SK-N-SH (cell line): ENCODE measurements at regions of chr2 and their contacts with region 1.

Region 1: DNA sequence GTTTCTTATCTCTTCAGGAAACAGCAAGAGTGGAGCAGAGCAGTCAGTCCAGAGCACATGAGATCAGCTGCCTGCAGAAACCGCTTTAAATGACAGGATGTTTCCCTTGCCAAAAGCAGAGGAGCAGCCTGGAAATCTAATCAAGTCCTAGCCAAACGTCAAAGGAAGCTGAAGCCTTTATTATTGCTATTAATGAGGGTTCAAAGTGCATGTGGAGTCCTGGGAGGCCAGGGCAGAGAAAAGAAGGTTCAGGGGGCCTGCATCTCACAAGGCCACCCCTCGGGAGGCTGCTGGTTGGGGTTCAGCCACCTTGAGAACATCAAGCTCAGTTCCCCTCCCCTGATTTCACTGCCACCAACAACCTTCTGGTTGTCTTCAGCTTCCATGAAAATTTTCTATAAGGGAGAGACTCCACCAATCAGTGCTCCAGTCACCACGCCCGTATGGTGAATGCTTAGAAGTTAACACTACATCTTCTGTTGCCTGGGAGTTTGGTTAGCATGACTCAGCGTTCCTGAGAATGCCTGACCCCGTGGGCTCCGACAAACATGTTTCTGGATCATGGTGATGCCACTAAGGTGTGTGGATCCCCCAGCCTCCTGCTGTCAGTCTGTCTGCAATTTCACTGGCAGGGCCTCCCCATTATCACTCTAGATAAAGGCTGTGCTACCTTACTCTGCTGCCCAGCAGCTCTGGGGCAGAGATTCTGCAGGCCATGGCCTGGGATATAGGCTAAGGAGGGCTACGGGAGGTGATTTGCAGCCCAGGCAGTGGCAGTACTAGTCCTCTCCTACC is 66.2 kb downstream of the STPG4 start:
- DNase-seq: peak; percentile 87
- H3K4me3 ChIP-seq: no peak overlapping the region
- H3K27ac ChIP-seq: peak overlapping the region; percentile 77 to 100
- H3K4me1 ChIP-seq: peaks cover 18 to 85% of the 10 kb centered on the region in 2 experiments
- H3K27me3 ChIP-seq: no peaks in the 10 kb centered on the region
- CTCF ChIP-seq: 0 out of 2 replicates have a peak, but pooled peaks have one; percentile 5
- EP300 ChIP-seq: peak in 1 of 2 experiments; percentile 100; a peak in 2 of 4 replicates
- RAD21 ChIP-seq: peak; percentile 0; the same call in 1 of the 2 replicates

Region 2: GRCh38 chr2:47033102-47033887 is 55.6 kb before region 1 on chr2:
- CTCF ChIA-PET with region 1: interaction called, 11 read pairs
- POLR2A ChIA-PET with region 1: interaction called, 4 read pairs
- DNase-seq: peak; percentile 79
- H3K4me3 ChIP-seq: no peak overlapping the region
- H3K27ac ChIP-seq: peak overlapping the region; percentile 100
- H3K4me1 ChIP-seq: peaks cover 41 to 74% of the 10 kb centered on the region in 2 experiments
- H3K27me3 ChIP-seq: no peaks in the 10 kb centered on the region
- CTCF ChIP-seq: no peak
- EP300 ChIP-seq: peak in 1 of 2 experiments; percentile 82; a peak in 1 of 4 replicates
- RAD21 ChIP-seq: peak; percentile 25; the same call in 1 of the 2 replicates

Region 3: DNA sequence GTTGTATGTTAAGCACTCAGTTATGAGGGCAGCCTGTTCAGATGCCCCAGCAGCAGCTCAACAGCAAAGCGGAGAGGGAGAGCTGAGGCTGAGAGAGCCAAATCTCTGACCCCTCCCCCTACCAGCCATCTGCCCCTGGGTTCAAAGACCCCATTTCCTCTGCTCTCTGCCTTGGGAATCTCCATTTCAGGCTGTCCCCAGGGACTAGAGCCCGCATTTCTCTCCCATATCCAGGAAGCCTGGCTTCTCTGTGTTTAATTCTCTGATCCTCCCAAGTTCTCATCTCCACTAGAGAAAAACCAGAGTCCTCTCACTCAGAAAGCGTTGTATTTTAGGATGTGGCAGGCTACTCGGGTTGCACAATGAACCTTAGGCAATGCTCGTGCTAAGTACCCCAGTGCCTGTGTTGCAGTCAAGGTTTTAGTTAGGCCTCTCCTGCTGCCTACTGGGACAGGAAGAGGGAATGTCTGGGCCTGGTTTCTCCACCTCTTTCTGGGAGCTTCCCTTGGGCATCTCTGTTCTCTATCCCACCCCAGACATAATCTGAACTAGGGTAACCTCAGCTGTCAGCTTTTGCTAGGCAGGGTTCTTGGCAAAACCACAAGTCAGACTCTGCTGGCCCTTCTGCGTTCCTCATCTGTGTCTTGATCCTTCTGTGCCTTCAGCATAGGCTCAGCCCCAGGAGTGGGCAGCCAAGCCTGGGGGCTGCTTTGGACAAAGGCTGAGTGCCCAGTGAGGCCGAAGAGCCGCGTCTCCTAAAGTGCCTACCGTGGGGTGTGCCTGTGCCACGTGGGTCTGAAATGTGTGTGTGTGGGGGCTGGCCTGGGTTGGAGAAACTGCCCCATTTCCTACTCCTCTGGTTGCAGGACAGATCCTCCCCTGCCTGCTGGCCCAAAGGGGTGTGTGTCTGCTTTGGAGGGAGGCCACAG is 30.6 kb before region 1 on chr2:
- CTCF ChIA-PET with region 1: interaction called, 33 read pairs
- POLR2A ChIA-PET with region 1: interaction called, 63 read pairs
- DNase-seq: no peak
- H3K4me3 ChIP-seq: no peak overlapping the region
- H3K27ac ChIP-seq: peak overlapping the region; percentile 99 to 100
- H3K4me1 ChIP-seq: peaks cover 38 to 81% of the 10 kb centered on the region in 2 experiments
- H3K27me3 ChIP-seq: no peaks in the 10 kb centered on the region
- CTCF ChIP-seq: no peak
- EP300 ChIP-seq: no peak
- RAD21 ChIP-seq: no peak

Region 4: DNA sequence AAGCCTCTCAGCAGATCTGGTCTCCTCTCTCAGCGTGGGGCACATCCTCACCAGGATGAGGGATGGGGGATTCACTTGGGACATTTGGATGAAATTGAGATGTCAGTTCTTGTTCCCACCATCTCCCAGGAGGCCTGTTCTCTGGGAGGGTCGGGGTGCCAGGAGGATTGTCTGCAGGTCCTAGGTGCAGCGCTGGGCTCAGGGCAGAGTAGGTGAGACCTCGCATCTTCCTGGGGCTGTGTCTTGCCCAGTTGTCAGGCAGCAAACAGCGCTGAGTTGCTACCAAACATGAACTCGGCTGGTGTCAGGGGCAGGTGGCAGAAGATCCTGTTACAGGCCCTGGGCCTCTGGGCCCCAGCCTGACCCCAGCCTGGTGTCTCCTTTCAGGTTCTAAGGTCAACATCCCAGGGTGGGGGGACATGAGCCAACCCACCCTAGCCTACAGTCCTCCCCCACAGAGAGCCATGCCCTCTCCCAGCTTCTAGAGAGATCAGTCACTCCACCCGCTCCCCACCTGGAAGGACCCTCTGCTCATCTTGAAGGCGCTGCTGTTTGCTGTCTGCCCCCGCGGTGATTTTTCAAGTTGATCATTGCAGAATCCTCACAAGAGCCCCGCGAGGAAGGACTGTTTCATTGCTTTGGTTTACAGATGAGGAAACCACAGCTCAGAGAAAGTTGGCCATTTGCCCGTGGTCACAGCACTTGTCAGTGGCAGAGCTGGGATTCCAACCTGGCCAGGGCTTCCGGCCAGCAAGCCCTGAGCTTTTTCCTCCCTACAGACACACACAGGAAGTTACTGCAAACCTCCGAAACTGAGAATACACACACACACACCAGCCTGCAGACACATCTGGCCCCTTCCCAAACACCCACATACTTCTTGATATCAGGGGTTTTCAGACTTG is 17.7 kb before region 1 on chr2:
- CTCF ChIA-PET with region 1: interaction called, 31 read pairs
- POLR2A ChIA-PET with region 1: interaction called, 36 read pairs
- DNase-seq: no peak
- H3K4me3 ChIP-seq: no peak overlapping the region
- H3K27ac ChIP-seq: peak overlapping the region; percentile 97 to 98
- H3K4me1 ChIP-seq: peaks cover 67 to 93% of the 10 kb centered on the region in 2 experiments
- H3K27me3 ChIP-seq: no peaks in the 10 kb centered on the region
- CTCF ChIP-seq: no peak
- EP300 ChIP-seq: peak in 1 of 2 experiments; percentile 37; a peak in 1 of 4 replicates
- RAD21 ChIP-seq: no peak

Region 5: DNA sequence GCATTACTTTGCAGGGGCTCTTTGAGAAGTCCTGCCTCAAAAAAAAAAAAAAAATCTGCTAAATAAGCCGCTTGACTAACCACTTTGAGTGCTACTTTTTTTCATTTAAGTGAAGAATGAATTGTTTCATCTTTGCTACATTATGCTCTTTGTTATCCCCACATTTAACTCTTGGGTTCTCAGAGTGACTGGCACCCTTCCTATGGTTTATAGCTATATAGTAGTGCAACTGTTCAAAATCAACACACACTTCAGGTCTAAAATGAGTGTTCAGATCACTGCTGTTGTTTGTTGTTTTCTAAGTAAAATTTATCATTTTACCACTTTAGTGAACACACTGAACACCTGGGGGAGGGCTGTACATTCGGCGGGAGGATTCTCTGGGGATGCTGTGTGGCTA is 52.7 kb after region 1 on chr2:
- CTCF ChIA-PET with region 1: no interaction called
- POLR2A ChIA-PET with region 1: no interaction called
- DNase-seq: no peak
- H3K4me3 ChIP-seq: no peak overlapping the region
- H3K27ac ChIP-seq: no peak overlapping the region
- H3K4me1 ChIP-seq: no peaks in the 10 kb centered on the region
- H3K27me3 ChIP-seq: no peaks in the 10 kb centered on the region
- CTCF ChIP-seq: no peak
- EP300 ChIP-seq: no peak
- RAD21 ChIP-seq: no peak

Region 6: GRCh38 chr2:47155091-47155876 is 66.4 kb after region 1 on chr2 and contains the start of gene STPG4:
- CTCF ChIA-PET with region 1: interaction called, 19 read pairs
- POLR2A ChIA-PET with region 1: interaction called, 6 read pairs
- DNase-seq: no peak
- H3K4me3 ChIP-seq: no peak within 1 kb of the TSS
- H3K27ac ChIP-seq: peak within 1 kb of the TSS; percentile 35 to 58
- H3K4me1 ChIP-seq: peaks cover 0 to 3% of the 10 kb centered on the region in 2 experiments; a peak in 1 of 4 replicates
- H3K27me3 ChIP-seq: no peaks in the 10 kb centered on the region
- CTCF ChIP-seq: no peak
- EP300 ChIP-seq: no peak
- RAD21 ChIP-seq: no peak
- polyA plus RNA-seq, gene STPG4: 0.20 and 0.21 TPM in 2 replicates